Posterior vena cava (tissue), 2 donors: ENCODE measurements at regions of chr20 and their contacts with region 1.

Region 1: DNA sequence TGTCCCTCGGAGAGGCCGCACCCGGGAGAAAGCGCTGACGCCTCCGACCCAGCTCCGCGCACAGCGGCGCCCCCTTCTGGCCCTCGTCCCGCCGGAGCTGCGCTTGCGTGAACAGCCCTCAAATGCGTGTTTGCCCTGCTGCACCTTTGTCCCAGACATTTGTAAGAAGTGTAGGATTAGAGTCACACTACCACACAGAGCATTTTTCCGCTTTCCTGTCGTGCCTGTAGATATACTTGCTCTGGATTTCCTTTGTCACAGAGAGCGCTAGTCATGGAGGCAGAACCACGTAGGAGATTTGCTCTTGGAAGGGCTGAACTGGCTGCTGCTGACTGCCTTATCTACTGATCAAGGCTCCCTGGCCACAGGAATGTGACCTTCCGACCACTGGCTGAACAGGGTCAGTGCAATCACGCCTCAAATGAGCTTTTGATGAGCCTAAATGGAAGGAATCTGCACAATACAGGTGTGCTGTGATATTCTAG is 62.3 kb downstream of the PAX1 start:
- DNase-seq: no peak

Region 2: GRCh38 chr20:21665687-21666446 is 101.9 kb before region 1 on chr20:
- intact Hi-C with region 1: no loop called
- DNase-seq: no peak

Region 3: DNA sequence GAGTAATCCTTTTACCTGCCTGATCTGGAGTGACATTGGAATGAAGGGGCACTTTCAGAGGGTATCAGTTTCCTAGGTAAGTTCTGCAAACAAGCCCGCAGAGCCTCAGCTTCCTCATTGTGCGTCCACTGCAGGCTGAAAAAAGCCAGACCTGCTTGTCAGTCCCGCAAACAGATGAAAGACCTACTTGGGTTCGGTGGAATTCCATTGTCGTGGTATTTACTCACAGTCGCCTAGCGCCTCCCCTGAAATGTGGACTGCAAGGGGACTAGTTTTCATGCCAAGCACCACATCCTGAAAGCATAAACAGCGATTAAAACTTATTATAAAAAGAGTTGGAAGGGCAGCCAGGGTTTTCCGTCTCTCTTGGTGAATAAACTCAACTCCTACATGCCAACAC is 59.2 kb after region 1 on chr20:
- intact Hi-C with region 1: loop called in 1 of 2 experiments (anchors 10 kb)
- DNase-seq: no peak